ENCODE measurements at regions of chr6 and their contacts with region 1.

Region 1: DNA sequence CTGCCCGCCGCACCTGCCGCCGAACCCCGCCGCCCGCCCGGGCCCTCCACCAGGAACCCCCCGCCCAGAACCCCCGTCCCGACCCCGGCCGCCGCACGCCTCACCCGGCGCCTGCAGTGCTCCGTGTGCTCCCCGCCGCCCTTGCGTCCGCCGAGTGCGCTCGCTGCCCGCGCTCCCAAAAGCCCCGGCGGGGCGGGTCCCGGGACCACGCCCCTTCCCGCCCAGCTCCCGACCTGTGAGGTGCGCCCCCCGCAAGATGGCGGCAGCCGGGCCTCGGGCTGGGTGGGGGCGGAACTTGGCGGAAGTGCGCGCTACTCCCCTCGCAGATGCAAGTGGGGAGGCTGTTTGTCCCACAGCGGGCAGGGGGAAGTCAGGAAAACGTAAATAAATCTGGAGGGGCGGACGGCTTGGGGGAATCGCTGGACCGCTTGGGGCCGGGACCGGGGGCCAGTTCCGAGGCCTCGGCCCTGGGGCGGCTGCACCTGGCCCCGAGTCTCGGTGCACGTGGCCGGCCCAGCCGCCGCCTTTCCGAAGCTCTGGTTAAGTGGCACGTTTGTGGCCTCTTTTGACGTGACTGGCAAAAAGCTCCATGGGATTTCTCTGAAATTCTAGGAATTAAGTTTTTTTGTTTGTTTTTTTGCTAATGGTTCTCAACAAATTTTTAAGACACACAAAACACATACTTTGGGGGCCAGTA is at the start of gene EZR:
- DNase-seq: peak; percentile 84
- ATAC-seq: peak; percentile 64
- H3K4me3 Mint-ChIP-seq: peak within 1 kb of the TSS; percentile 88
- H3K27ac Mint-ChIP-seq: peak within 1 kb of the TSS; percentile 92
- H3K4me1 Mint-ChIP-seq: peaks cover 35% of the 10 kb centered on the region
- H3K27me3 Mint-ChIP-seq: no peaks in the 10 kb centered on the region
- total RNA-seq, gene EZR: 235 to 257 TPM

Region 2: DNA sequence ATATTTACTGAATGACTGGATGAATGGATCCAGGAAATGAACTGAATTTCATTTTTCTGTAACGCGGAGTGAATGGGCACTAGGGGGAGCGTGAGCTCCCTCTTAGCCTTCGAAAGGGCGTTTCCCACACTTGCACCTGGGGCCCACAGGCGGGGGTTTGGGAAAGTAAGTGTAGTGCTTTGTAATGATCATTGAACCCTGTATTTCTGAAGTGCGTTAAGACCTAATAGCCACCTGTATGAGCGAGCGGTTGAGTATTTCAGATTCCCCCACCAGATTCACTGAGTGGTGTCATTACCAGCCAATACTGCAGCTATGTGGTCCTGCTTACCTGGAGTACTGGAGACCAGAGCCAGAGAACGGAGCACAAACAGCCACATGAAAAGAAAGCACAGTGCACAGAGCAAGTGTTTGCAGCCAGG is 159.0 kb before region 1 on chr6:
- POLR2A ChIA-PET with region 1: no interaction called
- DNase-seq: no peak
- ATAC-seq: peak; percentile 77
- H3K4me3 Mint-ChIP-seq: no peak overlapping the region
- H3K27ac Mint-ChIP-seq: no peak overlapping the region
- H3K4me1 Mint-ChIP-seq: peaks cover 38% of the 10 kb centered on the region
- H3K27me3 Mint-ChIP-seq: no peaks in the 10 kb centered on the region

Region 3: GRCh38 chr6:158853072-158853871 is 33.9 kb after region 1 on chr6:
- POLR2A ChIA-PET with region 1: interaction called, 11 read pairs
- DNase-seq: peak; percentile 69
- ATAC-seq: peak; percentile 88
- H3K4me3 Mint-ChIP-seq: no peak overlapping the region
- H3K27ac Mint-ChIP-seq: no peak overlapping the region
- H3K4me1 Mint-ChIP-seq: peaks cover 12% of the 10 kb centered on the region
- H3K27me3 Mint-ChIP-seq: no peaks in the 10 kb centered on the region

Region 4: DNA sequence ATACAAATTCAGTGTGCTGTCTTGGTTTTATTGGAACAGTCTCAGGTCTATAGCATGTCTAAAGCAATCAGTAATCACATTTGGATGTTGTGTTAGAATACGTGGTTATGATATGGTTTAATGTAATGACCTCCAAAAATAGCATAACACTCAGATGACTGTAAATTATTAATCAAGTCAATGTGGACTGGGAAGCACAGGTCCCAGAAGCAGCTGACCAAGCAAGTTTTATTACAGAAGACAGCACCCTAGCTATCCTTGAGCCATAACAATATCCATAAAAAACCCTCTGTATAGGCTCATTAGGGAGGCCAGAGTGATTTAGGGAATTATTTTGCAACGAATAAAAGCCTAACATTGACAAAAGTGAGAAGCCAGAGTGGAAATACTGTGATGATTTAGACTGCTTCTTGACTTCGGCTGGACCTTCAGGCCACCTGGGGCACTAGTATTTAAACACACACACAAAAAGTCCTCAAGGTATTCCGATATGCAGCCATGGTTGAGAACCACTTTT is 113.8 kb after region 1 on chr6:
- POLR2A ChIA-PET with region 1: no interaction called
- DNase-seq: no peak
- ATAC-seq: no peak
- H3K4me3 Mint-ChIP-seq: no peak overlapping the region
- H3K27ac Mint-ChIP-seq: no peak overlapping the region
- H3K4me1 Mint-ChIP-seq: no peaks in the 10 kb centered on the region
- H3K27me3 Mint-ChIP-seq: no peaks in the 10 kb centered on the region

Measured in activated naive CD8-positive, alpha-beta T cell treated with anti-CD3 and anti-CD28 coated beads, Interleukin-2, amount 10 ng/mL, durations not matched to agents 7 days and 5 days (primary cell).